ENCODE measurements at regions of chr1 and their contacts with region 1.

Region 1: GRCh38 chr1:38197312-38198021 is 150.9 kb upstream of the POU3F1 start:
- DNase-seq: no peak
- ATAC-seq: no peak

Region 2: GRCh38 chr1:38151399-38151798 is 46.1 kb before region 1 on chr1:
- intact Hi-C with region 1: no loop called
- DNase-seq: no peak
- ATAC-seq: no peak

Region 3: GRCh38 chr1:38173157-38173831 is 24.2 kb before region 1 on chr1:
- intact Hi-C with region 1: loop called in 1 of 2 experiments (anchors 1 kb)
- DNase-seq: no peak
- ATAC-seq: no peak

Region 4: GRCh38 chr1:38344716-38345115 is 147.2 kb after region 1 on chr1:
- intact Hi-C with region 1: no loop called
- DNase-seq: no peak
- ATAC-seq: no peak

Measured in left cardiac atrium (tissue), 4 donors.